ENCODE measurements at regions of chr20 and their contacts with region 1.

Region 1: DNA sequence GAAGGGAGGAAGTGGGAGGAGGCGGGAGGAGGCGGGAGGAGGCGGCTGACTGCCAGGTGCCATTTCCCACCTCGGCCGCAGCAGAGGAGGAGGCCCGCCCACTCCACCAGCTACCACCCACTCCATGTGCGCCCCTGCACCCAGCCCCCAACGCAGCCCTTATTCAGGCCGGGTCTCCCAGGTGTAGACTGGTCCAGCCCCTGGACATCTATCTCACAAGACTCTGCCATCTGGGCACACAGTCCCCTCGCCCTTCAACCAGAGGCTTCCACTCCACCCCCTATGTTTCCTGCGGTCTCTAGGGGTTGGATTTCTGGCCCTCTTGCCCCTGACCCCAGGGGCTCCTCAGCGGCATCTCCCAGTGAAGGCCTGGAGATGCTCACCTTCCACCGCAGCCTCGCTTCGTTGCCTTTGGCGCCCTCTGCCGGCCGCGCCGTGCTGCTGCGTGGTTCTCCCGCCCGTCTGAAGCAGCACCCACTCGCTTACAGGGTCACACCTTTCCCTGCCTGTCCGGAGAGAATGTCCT is 32.6 kb upstream of the FAM83D start:
- DNase-seq: peak; percentile 94
- H3K4me3 Mint-ChIP-seq: peak overlapping the region; percentile 64
- H3K27ac Mint-ChIP-seq: peak overlapping the region; percentile 88
- H3K4me1 Mint-ChIP-seq: peaks cover 39% of the 10 kb centered on the region
- H3K27me3 Mint-ChIP-seq: no peaks in the 10 kb centered on the region

Region 2: DNA sequence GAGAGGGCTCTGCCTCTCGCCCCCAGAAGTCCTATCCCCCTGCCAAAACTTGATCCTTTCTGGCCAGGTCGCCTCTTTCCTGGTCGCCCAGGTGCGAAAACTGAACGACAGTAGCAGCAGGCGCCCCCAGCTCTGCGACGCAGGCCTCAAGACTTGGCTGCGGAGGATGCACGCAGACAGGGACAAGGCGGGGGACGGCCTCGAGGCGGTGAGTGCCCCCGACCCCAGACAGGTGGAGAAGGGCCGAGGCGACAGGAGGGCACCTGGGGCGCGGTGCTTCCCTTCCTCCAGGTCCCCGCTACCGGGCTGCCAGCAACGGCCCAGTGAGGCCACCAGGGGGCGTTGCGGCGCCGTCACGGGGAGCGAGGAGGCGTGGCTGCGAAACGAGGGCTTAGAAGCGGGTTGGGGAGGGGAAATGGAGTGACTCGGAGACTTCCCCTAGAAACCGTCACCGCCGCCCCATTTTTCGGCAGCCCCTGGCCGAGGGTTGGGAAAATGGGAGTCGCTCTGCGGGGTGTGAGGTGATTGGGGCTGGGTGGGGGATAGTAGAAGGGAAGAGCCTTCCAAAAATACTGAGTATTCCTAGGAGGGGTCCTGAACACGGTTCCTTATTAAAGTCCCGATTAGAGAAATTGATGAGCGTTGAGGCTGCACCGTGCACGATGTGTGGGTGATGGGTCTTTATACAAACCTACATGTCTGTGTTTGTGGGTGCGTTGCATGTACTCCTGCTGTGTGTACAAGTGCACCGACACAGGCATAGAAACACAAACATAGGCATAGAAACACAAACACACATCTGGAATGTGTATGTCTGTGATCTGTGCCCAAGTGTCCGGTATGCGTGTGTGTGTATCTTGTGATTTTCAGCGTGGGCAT is 247.4 kb before region 1 on chr20:
- intact Hi-C with region 1: loop called (anchors 2 kb)
- DNase-seq: peak; percentile 98
- H3K4me3 Mint-ChIP-seq: peak overlapping the region; percentile 86
- H3K27ac Mint-ChIP-seq: no peak overlapping the region
- H3K4me1 Mint-ChIP-seq: peaks cover 7% of the 10 kb centered on the region
- H3K27me3 Mint-ChIP-seq: peaks cover 58% of the 10 kb centered on the region

Region 3: DNA sequence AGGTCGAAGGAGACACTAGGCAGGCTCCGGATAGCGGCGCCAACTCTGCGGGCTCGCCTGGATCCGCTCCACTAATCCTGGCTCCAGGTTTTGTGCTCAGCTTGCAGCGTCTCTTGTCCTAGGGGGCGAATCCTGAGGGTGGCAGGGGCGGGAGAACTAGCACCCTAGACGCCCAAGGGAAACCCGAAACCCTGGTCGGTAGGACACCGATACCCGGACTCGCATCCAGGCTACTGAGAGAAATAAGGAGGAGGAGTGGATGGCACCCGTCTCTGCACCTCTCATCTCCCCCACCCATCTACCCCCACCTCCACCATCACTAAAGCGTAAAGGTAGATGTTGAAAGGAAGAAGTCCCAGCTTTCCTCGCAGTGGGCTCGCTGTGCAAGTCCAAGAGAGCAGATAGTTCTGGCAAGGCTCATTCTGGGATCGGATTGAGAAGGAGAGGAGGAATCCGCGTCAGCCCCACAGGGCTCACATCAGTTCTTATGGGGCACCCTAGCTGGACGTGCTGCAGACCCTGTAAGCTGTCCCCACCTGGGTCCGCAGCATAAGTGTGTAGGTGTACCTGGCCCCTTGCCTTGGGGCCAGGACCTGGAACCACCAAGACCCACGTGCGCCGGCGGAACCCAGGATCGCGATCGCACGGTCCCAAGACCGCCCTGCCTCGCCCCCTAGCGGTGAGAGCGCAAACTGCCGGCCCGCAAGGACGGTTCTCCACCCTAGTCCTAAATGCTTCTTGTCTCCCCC is 162.5 kb before region 1 on chr20:
- intact Hi-C with region 1: loop called (anchors 5 kb)
- DNase-seq: peak; percentile 93
- H3K4me3 Mint-ChIP-seq: peak overlapping the region; percentile 70
- H3K27ac Mint-ChIP-seq: peak overlapping the region; percentile 73
- H3K4me1 Mint-ChIP-seq: peaks cover 35% of the 10 kb centered on the region
- H3K27me3 Mint-ChIP-seq: peaks cover 88% of the 10 kb centered on the region

Region 4: DNA sequence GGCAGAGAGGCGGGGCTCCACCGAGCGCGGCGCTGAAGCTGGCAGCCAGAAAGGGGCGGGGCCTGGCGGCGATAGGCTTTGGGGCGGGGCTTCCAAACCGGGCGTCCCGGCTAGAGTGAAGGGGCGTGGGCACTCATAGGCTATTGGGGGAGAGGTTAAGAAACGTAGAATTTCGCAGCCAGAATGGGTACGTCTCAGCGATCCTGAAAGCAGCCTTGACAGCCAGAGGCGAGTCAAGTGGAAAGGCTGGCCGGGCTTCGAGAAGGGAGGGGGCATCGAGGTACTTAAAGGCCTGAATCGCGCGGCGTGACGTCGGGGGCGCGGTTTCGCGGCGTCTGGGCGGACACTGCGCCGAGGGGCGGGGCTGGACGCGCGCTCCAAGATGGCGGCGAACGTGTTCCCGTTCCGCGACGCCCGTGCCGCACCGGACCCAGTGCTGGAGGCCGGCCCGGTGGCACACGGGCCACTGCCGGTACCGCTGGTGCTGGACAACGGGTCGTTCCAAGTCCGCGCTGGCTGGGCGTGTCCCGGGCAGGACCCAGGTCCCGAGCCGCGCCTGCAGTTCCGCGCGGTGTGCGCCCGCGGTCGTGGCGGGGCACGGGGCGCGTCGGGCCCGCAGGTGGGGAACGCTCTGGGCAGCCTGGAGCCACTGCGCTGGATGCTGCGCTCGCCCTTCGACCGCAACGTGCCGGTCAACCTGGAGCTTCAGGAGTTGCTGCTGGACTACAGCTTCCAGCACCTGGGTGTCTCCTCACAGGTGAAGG is 145.3 kb before region 1 on chr20 and contains the start of gene ACTR5:
- intact Hi-C with region 1: loop called (anchors 5 kb)
- DNase-seq: peak; percentile 99
- H3K4me3 Mint-ChIP-seq: peak within 1 kb of the TSS; percentile 91
- H3K27ac Mint-ChIP-seq: peak within 1 kb of the TSS; percentile 93
- H3K4me1 Mint-ChIP-seq: peaks cover 21% of the 10 kb centered on the region
- H3K27me3 Mint-ChIP-seq: peaks cover 9% of the 10 kb centered on the region
- total RNA-seq, gene ACTR5: 15.2 and 15.8 TPM in 2 replicates

Region 5: DNA sequence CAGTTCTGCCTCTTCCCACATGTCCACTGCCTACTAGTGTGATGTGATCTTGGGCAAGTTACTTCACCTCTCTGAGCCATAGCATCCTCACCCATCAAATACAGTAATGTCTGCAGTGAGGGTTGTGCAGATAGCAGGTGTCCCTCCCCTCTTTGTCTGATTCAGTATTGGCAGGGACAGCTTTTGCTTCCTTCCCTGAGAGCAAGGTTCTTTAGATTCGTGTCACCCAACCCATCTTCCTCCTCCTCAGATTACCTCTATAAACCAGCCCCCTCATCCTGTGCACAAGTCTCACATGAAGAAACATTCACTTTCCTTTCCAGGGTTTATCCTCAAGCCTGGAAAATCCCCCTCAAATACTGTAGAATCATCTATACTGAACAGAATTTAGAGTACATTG is 130.0 kb before region 1 on chr20:
- intact Hi-C with region 1: loop called (anchors 1 kb)
- DNase-seq: no peak
- H3K4me3 Mint-ChIP-seq: no peak overlapping the region
- H3K27ac Mint-ChIP-seq: peak overlapping the region; percentile 39
- H3K4me1 Mint-ChIP-seq: peaks cover 24% of the 10 kb centered on the region
- H3K27me3 Mint-ChIP-seq: no peaks in the 10 kb centered on the region

Region 6: DNA sequence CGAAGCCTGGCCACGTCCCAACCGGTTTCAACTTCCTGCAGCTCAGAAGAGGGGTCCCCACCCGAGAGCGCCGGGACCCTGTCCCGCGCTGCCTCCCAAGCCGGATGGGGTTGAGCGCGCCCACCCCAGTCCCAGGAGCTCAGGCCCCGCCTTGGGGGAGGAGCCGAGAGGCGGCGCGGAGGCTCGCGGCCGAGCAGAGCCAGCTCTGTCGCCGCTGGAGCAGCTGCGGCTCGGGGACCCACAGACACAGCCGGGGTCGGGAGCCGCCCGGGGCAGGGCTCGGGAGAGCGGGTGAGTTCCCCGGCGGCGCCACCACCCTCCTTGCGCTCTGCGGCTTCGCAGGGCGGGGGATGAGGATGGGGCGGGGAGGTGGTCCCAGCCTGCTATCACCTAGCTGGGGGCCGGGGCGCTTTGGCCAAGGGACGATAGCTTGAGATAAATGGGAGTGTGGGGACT is 88.1 kb before region 1 on chr20 and contains the start of gene PPP1R16B:
- intact Hi-C with region 1: loop called (anchors 1 kb)
- DNase-seq: peak; percentile 95
- H3K4me3 Mint-ChIP-seq: peak within 1 kb of the TSS; percentile 92
- H3K27ac Mint-ChIP-seq: peak within 1 kb of the TSS; percentile 96
- H3K4me1 Mint-ChIP-seq: peaks cover 48% of the 10 kb centered on the region
- H3K27me3 Mint-ChIP-seq: no peaks in the 10 kb centered on the region
- total RNA-seq, gene PPP1R16B: 133 TPM in 2 replicates

Region 7: GRCh38 chr20:38842558-38842981 is 51.1 kb before region 1 on chr20:
- intact Hi-C with region 1: loop called (anchors 2 kb)
- DNase-seq: peak; percentile 73
- H3K4me3 Mint-ChIP-seq: peak overlapping the region; percentile 78
- H3K27ac Mint-ChIP-seq: peak overlapping the region; percentile 98
- H3K4me1 Mint-ChIP-seq: peaks cover 65% of the 10 kb centered on the region
- H3K27me3 Mint-ChIP-seq: no peaks in the 10 kb centered on the region

Region 8: GRCh38 chr20:39155971-39156370 is 262.3 kb after region 1 on chr20:
- intact Hi-C with region 1: no loop called
- DNase-seq: no peak
- H3K4me3 Mint-ChIP-seq: no peak overlapping the region
- H3K27ac Mint-ChIP-seq: no peak overlapping the region
- H3K4me1 Mint-ChIP-seq: no peaks in the 10 kb centered on the region
- H3K27me3 Mint-ChIP-seq: peaks cover 9% of the 10 kb centered on the region

Measured in activated CD4-positive, alpha-beta T cell treated with anti-CD3 and anti-CD28 coated beads, Interleukin-2, amount 10 ng/mL, durations not matched to agents 24 days and 14 days (primary cell).